T-cell (primary cell): ENCODE measurements at regions of chr1 and their contacts with region 1.

Region 1: DNA sequence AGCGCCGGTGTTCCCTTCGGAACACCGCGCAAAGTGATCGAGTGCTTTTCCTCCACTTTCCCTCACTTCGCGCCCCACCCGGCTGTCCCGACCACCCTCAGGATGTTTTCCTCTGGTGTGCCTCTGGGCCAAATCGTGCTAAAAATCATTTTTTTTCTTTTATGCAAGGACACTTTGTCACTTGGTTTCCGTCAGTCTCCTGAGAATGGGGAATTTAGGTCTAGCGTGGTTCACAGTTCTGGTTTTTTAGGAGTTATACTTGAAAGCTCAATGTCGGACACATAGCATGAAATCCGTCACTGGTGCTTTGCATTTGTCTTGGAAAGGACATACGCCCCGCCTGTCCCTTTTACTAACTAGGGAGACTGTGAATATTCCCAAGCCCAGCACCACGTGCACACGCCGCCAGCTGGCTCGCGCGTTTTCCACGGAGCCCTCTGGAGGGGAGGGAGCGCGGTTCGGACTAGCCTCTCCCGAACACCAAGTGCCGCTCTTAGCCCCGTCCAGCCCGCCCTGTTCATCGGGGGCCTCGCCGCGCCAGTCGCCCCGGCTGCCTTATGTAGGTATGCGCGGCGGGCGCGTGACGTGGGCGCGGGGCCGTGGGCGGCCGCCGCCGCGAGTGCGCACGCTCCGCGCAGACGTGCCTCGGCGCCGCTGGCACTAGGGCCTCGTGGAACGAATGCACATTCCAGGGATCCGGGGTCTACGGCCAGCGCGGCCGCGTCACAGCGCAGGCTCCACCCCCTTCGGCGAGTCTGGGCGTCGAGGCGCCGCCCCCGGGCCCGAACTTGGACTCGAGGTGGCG is 572 bp upstream of the IRF2BP2 start:
- DNase-seq: peak; percentile 76 to 96 (median 88)
- ATAC-seq: peak; percentile 55 to 57 (median 56)
- H3K4me3 ChIP-seq: peak overlapping the region; percentile 82 to 84
- H3K4me3 Mint-ChIP-seq: peak overlapping the region; percentile 83 to 87 (median 84)
- H3K27ac ChIP-seq: peak overlapping the region; percentile 98
- H3K27ac Mint-ChIP-seq: peak overlapping the region; percentile 93 to 96
- H3K4me1 ChIP-seq: peaks cover 39 to 46% of the 10 kb centered on the region in 2 experiments
- H3K4me1 Mint-ChIP-seq: peaks cover 48 to 60% (median 51%) of the 10 kb centered on the region in 3 donors
- H3K27me3 ChIP-seq: no peaks in the 10 kb centered on the region
- H3K27me3 Mint-ChIP-seq: no peaks in the 10 kb centered on the region

Region 2: GRCh38 chr1:234599617-234600417 is 10.7 kb before region 1 on chr1:
- CTCF ChIA-PET with region 1: interaction called in 1 of 2 experiments, 55 read pairs
- POLR2A ChIA-PET with region 1: interaction called, 23 to 117 read pairs
- DNase-seq: peak; percentile 35 to 88 (median 73)
- ATAC-seq: peak; percentile 65 to 78 (median 76)
- H3K4me3 ChIP-seq: peak overlapping the region; percentile 53 to 62
- H3K4me3 Mint-ChIP-seq: peak overlapping the region; percentile 82 to 94 (median 88)
- H3K27ac ChIP-seq: peak overlapping the region; percentile 96
- H3K27ac Mint-ChIP-seq: peak overlapping the region; percentile 91 to 93
- H3K4me1 ChIP-seq: peaks cover 38 to 53% of the 10 kb centered on the region in 2 experiments
- H3K4me1 Mint-ChIP-seq: peaks cover 45 to 60% (median 60%) of the 10 kb centered on the region in 3 donors
- H3K27me3 ChIP-seq: no peaks in the 10 kb centered on the region
- H3K27me3 Mint-ChIP-seq: no peaks in the 10 kb centered on the region

Region 3: GRCh38 chr1:234709473-234710228 is 99.1 kb after region 1 on chr1:
- CTCF ChIA-PET with region 1: no interaction called
- POLR2A ChIA-PET with region 1: no interaction called
- DNase-seq: no peak
- ATAC-seq: peak in 1 of 4 experiments; percentile 27
- H3K4me3 ChIP-seq: no peak overlapping the region
- H3K4me3 Mint-ChIP-seq: no peak overlapping the region
- H3K27ac ChIP-seq: no peak overlapping the region
- H3K27ac Mint-ChIP-seq: no peak overlapping the region
- H3K4me1 ChIP-seq: peaks cover 2% of the 10 kb centered on the region in 2 experiments
- H3K4me1 Mint-ChIP-seq: peaks cover 12 to 18% (median 18%) of the 10 kb centered on the region in 3 donors
- H3K27me3 ChIP-seq: no peaks in the 10 kb centered on the region
- H3K27me3 Mint-ChIP-seq: no peaks in the 10 kb centered on the region

Region 4: GRCh38 chr1:234844479-234845031 is 234.0 kb after region 1 on chr1:
- CTCF ChIA-PET with region 1: interaction called in 1 of 2 experiments, 8 read pairs
- POLR2A ChIA-PET with region 1: interaction called, 3 to 16 read pairs
- DNase-seq: peak in 2 of 35 experiments; percentile 11 to 52
- ATAC-seq: peak; percentile 28 to 43 (median 40)
- H3K4me3 ChIP-seq: peak overlapping the region in 1 of 2 donors; percentile 27
- H3K4me3 Mint-ChIP-seq: peak overlapping the region; percentile 39 to 59 (median 49)
- H3K27ac ChIP-seq: peak overlapping the region; percentile 48
- H3K27ac Mint-ChIP-seq: peak overlapping the region; percentile 84 to 86
- H3K4me1 ChIP-seq: peaks cover 34 to 36% of the 10 kb centered on the region in 2 experiments
- H3K4me1 Mint-ChIP-seq: peaks cover 58 to 73% (median 64%) of the 10 kb centered on the region in 3 donors
- H3K27me3 ChIP-seq: no peaks in the 10 kb centered on the region
- H3K27me3 Mint-ChIP-seq: no peaks in the 10 kb centered on the region

Region 5: GRCh38 chr1:235011599-235012435 is 401.3 kb after region 1 on chr1:
- CTCF ChIA-PET with region 1: no interaction called
- POLR2A ChIA-PET with region 1: interaction called, 8 to 22 read pairs
- DNase-seq: peak; percentile 68 to 98 (median 94)
- ATAC-seq: peak; percentile 91 to 96 (median 94)
- H3K4me3 ChIP-seq: peak overlapping the region; percentile 42 to 48
- H3K4me3 Mint-ChIP-seq: peak overlapping the region; percentile 55 to 79 (median 61)
- H3K27ac ChIP-seq: peak overlapping the region; percentile 96
- H3K27ac Mint-ChIP-seq: peak overlapping the region; percentile 87 to 95
- H3K4me1 ChIP-seq: peaks cover 18 to 37% of the 10 kb centered on the region in 2 experiments
- H3K4me1 Mint-ChIP-seq: peaks cover 69 to 80% (median 71%) of the 10 kb centered on the region in 3 donors
- H3K27me3 ChIP-seq: no peaks in the 10 kb centered on the region
- H3K27me3 Mint-ChIP-seq: no peaks in the 10 kb centered on the region